Mammary epithelial cell (primary cell): ENCODE measurements at regions of chr7 and their contacts with region 1.

Region 1: GRCh38 chr7:6272481-6273323 is at the start of gene CYTH3:
- DNase-seq: peak; percentile 75
- H3K4me3 ChIP-seq: peak within 1 kb of the TSS; percentile 82 to 90 (median 86)
- H3K27ac ChIP-seq: peak within 1 kb of the TSS; percentile 75
- H3K4me1 ChIP-seq: peaks cover 19% of the 10 kb centered on the region
- H3K27me3 ChIP-seq: no peaks in the 10 kb centered on the region
- CTCF ChIP-seq: no peak
- total RNA-seq, gene CYTH3: 33.3 to 33.7 TPM

Region 2: GRCh38 chr7:6106140-6106904 is 166.4 kb before region 1 on chr7:
- CTCF ChIA-PET with region 1: interaction called, 11 read pairs
- dilution Hi-C with region 1: no loop called
- in situ Hi-C with region 1: no loop called
- intact Hi-C with region 1: no loop called
- DNase-seq: peak; percentile 49
- H3K4me3 ChIP-seq: peak overlapping the region; percentile 85 to 96 (median 93)
- H3K27ac ChIP-seq: peak overlapping the region; percentile 52
- H3K4me1 ChIP-seq: peaks cover 8% of the 10 kb centered on the region
- H3K27me3 ChIP-seq: no peaks in the 10 kb centered on the region
- CTCF ChIP-seq: peak in 1 of 2 donors; percentile 37

Region 3: GRCh38 chr7:6160191-6160623 is 112.5 kb before region 1 on chr7:
- CTCF ChIA-PET with region 1: interaction called, 3 read pairs
- dilution Hi-C with region 1: no loop called
- in situ Hi-C with region 1: no loop called
- intact Hi-C with region 1: loop called (anchors 2 kb)
- DNase-seq: peak; percentile 6
- H3K4me3 ChIP-seq: no peak overlapping the region
- H3K27ac ChIP-seq: no peak overlapping the region
- H3K4me1 ChIP-seq: no peaks in the 10 kb centered on the region
- H3K27me3 ChIP-seq: no peaks in the 10 kb centered on the region
- CTCF ChIP-seq: peak; percentile 8 to 63

Region 4: DNA sequence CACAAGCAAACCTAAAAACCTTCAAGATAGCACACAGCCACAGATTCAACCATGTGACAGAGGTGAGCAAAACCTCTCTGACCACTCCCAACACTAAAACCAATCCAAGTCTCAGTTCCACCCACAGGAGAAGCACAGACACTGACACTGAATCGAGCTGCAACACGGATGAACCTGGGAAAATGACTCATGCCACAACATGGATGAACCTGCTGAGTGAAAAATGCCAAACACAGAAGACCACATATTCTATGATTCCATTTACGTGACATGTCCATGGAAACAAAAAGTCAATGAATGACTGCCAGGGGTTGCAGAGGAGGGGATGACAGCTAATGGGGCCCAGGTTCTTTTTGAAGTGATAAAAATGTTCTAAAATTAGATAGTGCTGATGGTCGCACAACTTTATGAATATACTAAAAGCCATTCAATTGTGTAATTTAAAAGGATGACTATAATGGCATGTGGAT is 22.3 kb before region 1 on chr7:
- CTCF ChIA-PET with region 1: no interaction called
- dilution Hi-C with region 1: no loop called
- in situ Hi-C with region 1: no loop called
- intact Hi-C with region 1: loop called (anchors 2 kb)
- DNase-seq: peak; percentile 95
- H3K4me3 ChIP-seq: no peak overlapping the region
- H3K27ac ChIP-seq: peak overlapping the region; percentile 98
- H3K4me1 ChIP-seq: peaks cover 49% of the 10 kb centered on the region
- H3K27me3 ChIP-seq: no peaks in the 10 kb centered on the region
- CTCF ChIP-seq: no peak

Region 5: GRCh38 chr7:6283391-6284390 is 11.0 kb after region 1 on chr7:
- CTCF ChIA-PET with region 1: no interaction called
- dilution Hi-C with region 1: no loop called
- in situ Hi-C with region 1: no loop called
- intact Hi-C with region 1: loop called (anchors 1 kb)
- DNase-seq: peak; percentile 52
- H3K4me3 ChIP-seq: no peak overlapping the region
- H3K27ac ChIP-seq: peak overlapping the region; percentile 98
- H3K4me1 ChIP-seq: peaks cover 25% of the 10 kb centered on the region
- H3K27me3 ChIP-seq: no peaks in the 10 kb centered on the region
- CTCF ChIP-seq: no peak

Region 6: GRCh38 chr7:6306471-6306870 is 33.8 kb after region 1 on chr7:
- CTCF ChIA-PET with region 1: no interaction called
- dilution Hi-C with region 1: no loop called
- in situ Hi-C with region 1: no loop called
- intact Hi-C with region 1: loop called (anchors 5 kb)
- DNase-seq: peak; percentile 80
- H3K4me3 ChIP-seq: no peak overlapping the region
- H3K27ac ChIP-seq: peak overlapping the region; percentile 38
- H3K4me1 ChIP-seq: peaks cover 12% of the 10 kb centered on the region
- H3K27me3 ChIP-seq: no peaks in the 10 kb centered on the region
- CTCF ChIP-seq: no peak